Activated CD4-positive, alpha-beta T cell treated with anti-CD3 and anti-CD28 coated beads for 36 hours (primary cell): ENCODE measurements at regions of chr7 and their contacts with region 1.

Region 1: GRCh38 chr7:140304191-140304799 is 94.0 kb downstream of the SLC37A3 start:
- DNase-seq: peak; percentile 56
- ATAC-seq: peak; percentile 95
- H3K4me3 Mint-ChIP-seq: no peak overlapping the region
- H3K27ac Mint-ChIP-seq: peak overlapping the region; percentile 83
- H3K4me1 Mint-ChIP-seq: peaks cover 16% of the 10 kb centered on the region
- H3K27me3 Mint-ChIP-seq: no peaks in the 10 kb centered on the region

Region 2: DNA sequence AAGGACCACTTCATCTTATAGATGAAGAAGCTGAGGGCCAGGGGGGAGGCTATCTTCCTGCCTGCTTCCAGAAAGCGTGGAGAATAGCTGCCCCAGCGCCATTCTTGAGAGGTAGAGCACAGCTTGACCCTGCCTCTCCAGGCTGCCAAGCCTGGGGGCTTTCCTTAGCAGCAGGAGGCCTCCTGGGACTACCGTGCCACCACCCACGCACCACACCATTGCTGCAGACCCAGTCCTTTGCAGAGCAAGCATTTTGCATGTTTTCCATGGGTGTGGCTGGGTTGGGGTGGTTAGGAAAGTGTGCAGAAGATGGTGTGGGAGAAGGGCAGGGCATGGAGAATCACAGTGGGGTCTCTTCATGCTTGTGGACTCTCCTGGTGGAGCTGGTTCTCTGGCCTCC is 410.3 kb before region 1 on chr7:
- CTCF ChIA-PET with region 1: no interaction called
- POLR2A ChIA-PET with region 1: no interaction called
- intact Hi-C with region 1: no loop called
- DNase-seq: no peak
- ATAC-seq: no peak
- H3K4me3 Mint-ChIP-seq: no peak overlapping the region
- H3K27ac Mint-ChIP-seq: no peak overlapping the region
- H3K4me1 Mint-ChIP-seq: no peaks in the 10 kb centered on the region
- H3K27me3 Mint-ChIP-seq: no peaks in the 10 kb centered on the region

Region 3: GRCh38 chr7:140010194-140010895 is 293.9 kb before region 1 on chr7:
- CTCF ChIA-PET with region 1: interaction called, 3 read pairs
- POLR2A ChIA-PET with region 1: no interaction called
- intact Hi-C with region 1: loop called in 1 of 2 experiments (anchors 10 kb)
- DNase-seq: no peak
- ATAC-seq: no peak
- H3K4me3 Mint-ChIP-seq: no peak overlapping the region
- H3K27ac Mint-ChIP-seq: no peak overlapping the region
- H3K4me1 Mint-ChIP-seq: no peaks in the 10 kb centered on the region
- H3K27me3 Mint-ChIP-seq: no peaks in the 10 kb centered on the region

Region 4: GRCh38 chr7:140036224-140036962 is 267.9 kb before region 1 on chr7:
- CTCF ChIA-PET with region 1: no interaction called
- POLR2A ChIA-PET with region 1: no interaction called
- intact Hi-C with region 1: loop called in 1 of 2 experiments (anchors 10 kb)
- DNase-seq: peak; percentile 43
- ATAC-seq: peak; percentile 82
- H3K4me3 Mint-ChIP-seq: no peak overlapping the region
- H3K27ac Mint-ChIP-seq: no peak overlapping the region
- H3K4me1 Mint-ChIP-seq: peaks cover 25% of the 10 kb centered on the region
- H3K27me3 Mint-ChIP-seq: no peaks in the 10 kb centered on the region

Region 5: DNA sequence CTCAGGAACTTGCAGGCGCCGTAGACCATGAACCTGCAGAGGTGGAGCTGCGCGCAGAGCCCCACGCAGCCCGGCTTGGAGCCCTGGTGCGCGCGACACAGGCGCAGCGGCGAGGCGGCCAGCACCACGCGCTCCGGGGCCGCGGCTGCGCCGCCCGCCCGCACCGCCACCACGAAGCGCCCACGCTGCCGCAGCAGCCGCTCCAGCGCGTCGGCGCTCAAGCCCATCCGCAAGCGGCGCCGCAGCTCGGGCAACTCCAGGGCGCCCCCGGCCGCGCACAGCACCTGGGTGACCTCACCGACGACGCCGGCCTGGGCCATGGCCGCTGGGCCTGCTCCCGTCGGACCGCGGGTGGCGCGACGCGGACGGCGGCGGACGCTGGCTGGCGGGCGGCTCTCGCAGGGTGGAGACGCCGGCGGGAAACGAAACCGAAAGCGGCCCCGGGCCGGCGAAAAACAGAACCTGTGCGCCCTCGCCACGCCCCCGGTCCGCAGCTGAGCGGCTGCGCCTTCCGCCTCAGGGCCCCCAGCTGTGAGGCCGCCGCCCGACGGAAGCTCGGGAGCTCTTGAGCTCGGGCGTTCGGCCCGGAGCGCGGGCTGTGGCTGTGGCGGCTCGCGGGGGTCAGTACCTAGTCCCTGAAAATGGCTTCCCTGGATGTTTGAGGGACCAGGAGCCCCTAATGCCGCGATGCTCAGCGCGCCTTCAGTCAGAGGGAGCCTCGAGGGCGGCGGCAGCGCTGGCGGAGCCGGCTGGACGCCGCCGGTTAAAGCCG is 241.6 kb before region 1 on chr7 and contains the start of gene PARP12:
- CTCF ChIA-PET with region 1: no interaction called
- POLR2A ChIA-PET with region 1: no interaction called
- intact Hi-C with region 1: loop called in 1 of 2 experiments (anchors 10 kb)
- DNase-seq: peak; percentile 91
- ATAC-seq: peak; percentile 65
- H3K4me3 Mint-ChIP-seq: peak within 1 kb of the TSS; percentile 78
- H3K27ac Mint-ChIP-seq: peak within 1 kb of the TSS; percentile 75
- H3K4me1 Mint-ChIP-seq: peaks cover 36% of the 10 kb centered on the region
- H3K27me3 Mint-ChIP-seq: no peaks in the 10 kb centered on the region
- total RNA-seq, gene PARP12: 25.7 to 28.7 TPM

Region 6: GRCh38 chr7:140581411-140581810 is 277.1 kb after region 1 on chr7:
- CTCF ChIA-PET with region 1: no interaction called
- POLR2A ChIA-PET with region 1: no interaction called
- intact Hi-C with region 1: no loop called
- DNase-seq: no peak
- ATAC-seq: no peak
- H3K4me3 Mint-ChIP-seq: no peak overlapping the region
- H3K27ac Mint-ChIP-seq: no peak overlapping the region
- H3K4me1 Mint-ChIP-seq: no peaks in the 10 kb centered on the region
- H3K27me3 Mint-ChIP-seq: peaks cover 2% of the 10 kb centered on the region